ENCODE measurements at regions of chr5 and their contacts with region 1.

Region 1: DNA sequence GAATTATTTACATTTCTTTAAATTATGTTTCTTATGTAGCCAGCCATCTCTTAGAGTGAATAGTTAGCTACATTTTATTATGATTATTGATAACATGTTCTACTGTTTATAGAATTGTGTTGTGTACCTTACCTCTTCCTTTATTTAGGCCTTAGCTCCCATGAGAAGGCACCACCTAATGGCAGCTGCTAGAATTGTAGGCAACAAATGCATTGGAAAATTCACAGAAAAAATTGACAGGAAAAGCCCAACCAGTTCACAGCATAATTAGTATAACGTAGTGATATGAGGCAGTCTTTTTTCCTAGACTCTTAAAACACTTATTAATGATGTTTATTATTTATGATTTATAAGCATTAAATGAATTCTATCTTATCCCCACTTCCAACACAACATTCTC is 175.8 kb downstream of the WDR70 start:
- DNase-seq: no peak
- H3K4me3 ChIP-seq: no peak overlapping the region
- H3K27ac ChIP-seq: peak overlapping the region in 2 of 4 donors; percentile 62 to 70
- H3K4me1 ChIP-seq: peaks cover 0 to 17% (median 15%) of the 10 kb centered on the region in 4 donors
- H3K27me3 ChIP-seq: no peaks in the 10 kb centered on the region
- CTCF ChIP-seq: no peak
- EP300 ChIP-seq: no peak
- POLR2A ChIP-seq: no peak

Region 2: DNA sequence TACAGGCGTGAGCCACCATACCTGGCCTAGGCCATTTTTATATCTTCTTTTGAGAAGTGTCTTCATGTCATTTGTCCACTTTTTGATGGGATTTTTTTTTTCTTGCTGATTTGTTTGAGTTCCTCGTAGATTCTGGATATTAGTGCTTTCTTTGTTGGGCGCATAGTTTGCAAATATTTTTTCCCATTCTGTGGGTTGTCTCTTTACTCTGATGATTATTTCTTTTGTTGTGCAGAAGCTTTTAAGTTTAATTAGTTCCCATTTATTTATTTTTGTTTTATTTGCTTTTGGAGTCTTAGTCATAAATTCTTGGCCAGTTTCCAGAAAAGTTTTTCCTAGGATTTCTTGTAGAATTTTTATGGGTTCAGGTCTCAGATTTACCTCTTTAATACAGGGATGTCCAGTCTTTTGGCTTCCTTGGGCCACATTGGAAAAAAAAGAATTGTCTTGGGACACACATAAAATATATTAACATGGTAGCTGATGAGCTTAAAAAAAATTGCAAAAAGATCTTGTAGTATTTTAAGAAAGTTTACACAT is 53.9 kb before region 1 on chr5:
- intact Hi-C with region 1: loop called (anchors 5 kb)
- DNase-seq: no peak
- H3K4me3 ChIP-seq: no peak overlapping the region
- H3K27ac ChIP-seq: no peak overlapping the region
- H3K4me1 ChIP-seq: peaks cover 0 to 14% (median 6%) of the 10 kb centered on the region in 4 donors
- H3K27me3 ChIP-seq: no peaks in the 10 kb centered on the region
- CTCF ChIP-seq: no peak
- EP300 ChIP-seq: no peak
- POLR2A ChIP-seq: no peak

Region 3: DNA sequence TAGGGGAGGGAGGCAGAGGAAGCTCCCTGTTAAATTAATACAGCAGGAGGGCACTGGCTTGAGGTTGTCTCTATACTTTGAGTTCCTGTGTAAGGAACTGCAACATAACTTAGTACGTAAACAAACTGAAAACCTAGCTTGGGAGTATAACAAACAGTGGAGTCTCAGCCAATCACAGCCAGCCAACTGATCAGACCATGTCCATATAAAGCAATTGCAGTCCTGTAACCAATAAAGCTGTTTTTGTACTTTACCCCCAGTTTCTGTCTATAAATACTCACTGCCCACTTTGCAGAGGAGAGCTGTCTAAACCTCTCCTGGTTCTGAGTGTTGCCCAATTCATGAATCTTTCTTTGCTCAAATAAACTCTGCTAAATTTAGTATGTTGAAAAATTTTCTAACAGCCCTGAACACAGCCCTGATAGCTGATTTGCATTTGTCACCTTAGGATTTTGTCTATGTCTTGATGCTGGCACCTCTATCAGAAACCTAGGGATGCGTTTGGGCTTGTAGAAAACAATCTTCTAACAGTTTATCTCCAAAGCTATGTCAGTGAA is 245.0 kb after region 1 on chr5:
- intact Hi-C with region 1: no loop called
- DNase-seq: no peak
- H3K4me3 ChIP-seq: no peak overlapping the region
- H3K27ac ChIP-seq: no peak overlapping the region
- H3K4me1 ChIP-seq: no peaks in the 10 kb centered on the region
- H3K27me3 ChIP-seq: no peaks in the 10 kb centered on the region
- CTCF ChIP-seq: no peak
- EP300 ChIP-seq: no peak
- POLR2A ChIP-seq: no peak

Region 4: DNA sequence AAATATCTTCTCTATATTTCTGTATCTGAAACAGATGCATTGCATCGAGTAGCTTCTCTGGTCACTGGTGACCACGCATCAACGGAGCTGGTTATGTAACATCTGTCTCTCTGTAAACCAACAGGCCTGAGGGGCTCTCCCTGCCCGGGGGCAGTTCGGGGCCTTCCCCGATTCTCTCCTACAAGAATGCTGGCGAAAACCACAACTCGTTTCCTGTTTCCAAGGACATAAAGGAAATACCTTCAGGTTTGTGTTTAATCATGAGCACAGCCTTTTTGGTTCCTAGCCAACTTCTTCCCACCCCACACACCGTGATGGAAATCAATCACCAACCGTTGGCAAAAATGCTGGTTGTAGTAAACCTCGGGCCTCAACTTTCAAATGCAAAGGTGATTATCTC is 259.8 kb after region 1 on chr5:
- intact Hi-C with region 1: no loop called
- DNase-seq: no peak
- H3K4me3 ChIP-seq: no peak overlapping the region
- H3K27ac ChIP-seq: peak overlapping the region in 2 of 4 donors; percentile 12 to 79
- H3K4me1 ChIP-seq: peaks cover 2 to 56% (median 35%) of the 10 kb centered on the region in 4 donors
- H3K27me3 ChIP-seq: no peaks in the 10 kb centered on the region
- CTCF ChIP-seq: no peak
- EP300 ChIP-seq: no peak
- POLR2A ChIP-seq: no peak

Region 5: GRCh38 chr5:37859805-37860204 is 304.9 kb after region 1 on chr5:
- intact Hi-C with region 1: no loop called
- DNase-seq: no peak
- H3K4me3 ChIP-seq: no peak overlapping the region
- H3K27ac ChIP-seq: no peak overlapping the region
- H3K4me1 ChIP-seq: no peaks in the 10 kb centered on the region
- H3K27me3 ChIP-seq: no peaks in the 10 kb centered on the region
- CTCF ChIP-seq: no peak
- EP300 ChIP-seq: no peak
- POLR2A ChIP-seq: no peak